ENCODE measurements at regions of chr3 and their contacts with region 1.

Region 1: GRCh38 chr3:9932843-9933560 is 632 bp upstream of the CRELD1 start:
- DNase-seq: peak; percentile 83
- ATAC-seq: peak; percentile 71
- H3K4me3 Mint-ChIP-seq: peak overlapping the region; percentile 98
- H3K27ac Mint-ChIP-seq: peak overlapping the region; percentile 98
- H3K4me1 Mint-ChIP-seq: peaks cover 41% of the 10 kb centered on the region
- H3K27me3 Mint-ChIP-seq: no peaks in the 10 kb centered on the region
- CTCF ChIP-seq: peak; percentile 71

Region 2: DNA sequence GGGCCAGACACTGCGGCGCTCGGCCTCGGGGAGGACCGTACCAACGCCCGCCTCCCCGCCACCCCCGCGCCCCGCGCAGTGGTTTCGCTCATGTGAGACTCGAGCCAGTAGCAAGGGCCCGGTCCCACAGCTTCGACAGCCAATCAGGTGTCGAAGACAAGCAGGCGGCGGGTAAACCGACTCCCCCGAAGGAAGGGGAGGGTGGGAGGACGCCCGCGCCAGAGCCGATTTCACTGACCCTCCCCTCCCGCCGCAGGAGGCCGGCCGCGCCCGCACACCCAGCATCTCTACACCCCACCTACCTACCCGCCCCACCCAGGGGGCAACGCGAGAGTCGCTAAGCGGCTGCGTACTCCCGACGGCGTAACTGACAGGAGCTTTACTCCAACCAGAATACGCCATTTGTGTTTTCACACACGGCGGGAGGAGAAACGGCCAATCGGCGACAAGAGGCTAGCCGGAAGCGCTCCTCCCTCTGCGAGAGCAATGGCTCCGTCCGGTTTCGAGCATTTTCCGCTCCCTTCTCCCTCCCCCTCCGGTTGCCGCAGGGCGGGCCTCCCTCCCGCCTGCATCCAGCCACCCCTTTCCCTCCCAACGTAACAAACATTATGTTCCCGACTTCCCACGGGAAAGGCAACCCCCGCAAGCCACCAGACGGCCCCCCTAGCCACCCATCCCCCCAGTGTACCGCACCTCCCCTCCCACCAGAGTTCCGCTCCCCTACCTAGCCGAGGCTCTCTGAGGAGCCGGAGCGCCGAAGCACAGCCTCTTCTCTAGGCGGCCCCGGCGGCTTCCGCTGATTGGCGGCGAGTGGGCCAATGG is 536.1 kb before region 1 on chr3:
- CTCF ChIA-PET with region 1: no interaction called
- POLR2A ChIA-PET with region 1: interaction called, 12 read pairs
- intact Hi-C with region 1: loop called (anchors 1 kb)
- DNase-seq: peak; percentile 99
- ATAC-seq: peak; percentile 71
- H3K4me3 Mint-ChIP-seq: peak overlapping the region; percentile 98
- H3K27ac Mint-ChIP-seq: peak overlapping the region; percentile 100
- H3K4me1 Mint-ChIP-seq: peaks cover 61% of the 10 kb centered on the region
- H3K27me3 Mint-ChIP-seq: no peaks in the 10 kb centered on the region
- CTCF ChIP-seq: no peak

Region 3: DNA sequence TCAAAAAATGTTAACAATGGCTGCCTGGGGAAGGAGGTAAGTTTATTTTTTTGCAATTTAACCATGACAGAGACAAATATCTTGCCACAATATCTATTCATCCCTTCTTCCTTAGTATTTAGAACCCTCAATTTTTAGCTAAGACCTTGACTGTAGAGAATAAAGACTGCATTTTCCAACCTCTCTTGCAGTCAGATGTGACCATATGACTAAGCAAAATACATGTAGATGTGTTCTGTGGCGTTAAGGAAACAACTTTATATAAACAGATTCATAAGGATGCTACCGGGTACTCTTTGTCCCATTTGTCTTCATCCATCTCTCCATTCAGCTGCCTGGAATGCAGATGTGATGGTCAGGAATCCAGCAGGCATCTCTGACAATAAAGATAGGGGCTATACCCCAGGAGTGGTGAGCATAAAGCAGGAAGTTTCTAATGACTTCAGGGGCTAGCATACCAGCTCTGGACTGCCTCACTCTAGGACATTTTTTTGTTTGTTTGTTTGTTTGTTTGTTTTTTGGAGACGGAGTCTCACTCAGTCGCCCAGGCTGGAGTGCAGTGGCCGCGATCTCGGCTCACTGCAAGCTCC is 420.5 kb before region 1 on chr3:
- CTCF ChIA-PET with region 1: no interaction called
- POLR2A ChIA-PET with region 1: no interaction called
- intact Hi-C with region 1: no loop called
- DNase-seq: no peak
- ATAC-seq: no peak
- H3K4me3 Mint-ChIP-seq: no peak overlapping the region
- H3K27ac Mint-ChIP-seq: no peak overlapping the region
- H3K4me1 Mint-ChIP-seq: no peaks in the 10 kb centered on the region
- H3K27me3 Mint-ChIP-seq: peaks cover 24% of the 10 kb centered on the region
- CTCF ChIP-seq: no peak

Region 4: GRCh38 chr3:9792405-9793160 is 140.4 kb before region 1 on chr3 and contains the starts of genes ARPC4 and TADA3:
- CTCF ChIA-PET with region 1: interaction called, 7 read pairs
- POLR2A ChIA-PET with region 1: interaction called, 34 read pairs
- intact Hi-C with region 1: loop called (anchors 2 kb)
- DNase-seq: peak; percentile 92
- ATAC-seq: peak; percentile 75
- H3K4me3 Mint-ChIP-seq: peak within 1 kb of the TSS; percentile 99
- H3K27ac Mint-ChIP-seq: peak within 1 kb of the TSS; percentile 100
- H3K4me1 Mint-ChIP-seq: peaks cover 67% of the 10 kb centered on the region
- H3K27me3 Mint-ChIP-seq: no peaks in the 10 kb centered on the region
- CTCF ChIP-seq: no peak
- total RNA-seq, gene ARPC4: 315 and 338 TPM in 2 replicates
- total RNA-seq, gene TADA3: 43.8 and 44.7 TPM in 2 replicates

Region 5: DNA sequence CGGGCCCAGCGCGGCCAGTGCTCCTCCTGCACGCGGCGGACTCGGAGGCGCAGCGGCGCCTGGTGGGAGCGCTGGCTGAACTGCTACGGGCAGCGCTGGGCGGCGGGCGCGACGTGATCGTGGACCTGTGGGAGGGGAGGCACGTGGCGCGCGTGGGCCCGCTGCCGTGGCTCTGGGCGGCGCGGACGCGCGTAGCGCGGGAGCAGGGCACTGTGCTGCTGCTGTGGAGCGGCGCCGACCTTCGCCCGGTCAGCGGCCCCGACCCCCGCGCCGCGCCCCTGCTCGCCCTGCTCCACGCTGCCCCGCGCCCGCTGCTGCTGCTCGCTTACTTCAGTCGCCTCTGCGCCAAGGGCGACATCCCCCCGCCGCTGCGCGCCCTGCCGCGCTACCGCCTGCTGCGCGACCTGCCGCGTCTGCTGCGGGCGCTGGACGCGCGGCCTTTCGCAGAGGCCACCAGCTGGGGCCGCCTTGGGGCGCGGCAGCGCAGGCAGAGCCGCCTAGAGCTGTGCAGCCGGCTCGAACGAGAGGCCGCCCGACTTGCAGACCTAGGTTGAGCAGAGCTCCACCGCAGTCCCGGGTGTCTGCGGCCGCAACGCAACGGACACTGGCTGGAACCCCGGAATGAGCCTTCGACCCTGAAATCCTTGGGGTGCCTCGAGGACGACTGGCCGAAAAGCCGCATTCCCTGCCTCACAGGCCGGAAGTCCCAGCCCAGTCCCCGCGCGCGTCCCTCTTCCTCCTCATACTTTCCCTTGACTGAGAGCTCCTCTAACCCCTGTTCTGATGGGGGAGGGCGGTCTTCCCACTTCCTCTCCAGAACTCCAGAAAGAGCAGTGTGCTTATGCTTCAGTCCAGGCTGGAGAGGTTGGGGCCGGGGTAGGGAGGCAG is 17.5 kb before region 1 on chr3:
- CTCF ChIA-PET with region 1: interaction called, 6 read pairs
- POLR2A ChIA-PET with region 1: interaction called, 13 read pairs
- intact Hi-C with region 1: loop called (anchors 2 kb)
- DNase-seq: peak; percentile 22
- ATAC-seq: peak; percentile 61
- H3K4me3 Mint-ChIP-seq: peak overlapping the region; percentile 78
- H3K27ac Mint-ChIP-seq: no peak overlapping the region
- H3K4me1 Mint-ChIP-seq: peaks cover 17% of the 10 kb centered on the region
- H3K27me3 Mint-ChIP-seq: peaks cover 10% of the 10 kb centered on the region
- CTCF ChIP-seq: no peak

Region 6: GRCh38 chr3:10010486-10011465 is 77.8 kb after region 1 on chr3:
- CTCF ChIA-PET with region 1: interaction called, 3 read pairs
- POLR2A ChIA-PET with region 1: interaction called, 6 read pairs
- intact Hi-C with region 1: loop called (anchors 1 kb)
- DNase-seq: peak; percentile 86
- ATAC-seq: peak; percentile 86
- H3K4me3 Mint-ChIP-seq: peak overlapping the region; percentile 65
- H3K27ac Mint-ChIP-seq: peak overlapping the region; percentile 1
- H3K4me1 Mint-ChIP-seq: peaks cover 23% of the 10 kb centered on the region
- H3K27me3 Mint-ChIP-seq: no peaks in the 10 kb centered on the region
- CTCF ChIP-seq: no peak

Region 7: DNA sequence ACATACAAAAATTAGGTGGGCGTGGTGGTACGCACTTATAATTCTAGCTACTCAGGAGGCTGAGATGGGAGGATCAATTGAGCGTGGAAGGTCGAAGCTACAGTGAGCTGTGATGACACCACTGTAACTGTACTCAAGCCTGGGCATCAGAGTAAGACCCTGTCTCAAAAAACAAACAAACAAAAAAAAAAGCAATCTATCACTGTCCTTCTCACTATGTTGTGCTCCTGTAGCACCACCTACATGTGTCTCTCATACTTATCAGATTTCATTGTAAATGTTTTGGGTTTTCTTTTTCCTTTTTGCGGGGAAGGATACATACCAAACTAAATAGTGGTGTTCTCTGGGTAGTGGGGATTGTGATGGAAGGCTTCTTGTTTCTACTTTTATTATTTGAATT is 108.0 kb after region 1 on chr3:
- CTCF ChIA-PET with region 1: no interaction called
- POLR2A ChIA-PET with region 1: no interaction called
- intact Hi-C with region 1: no loop called
- DNase-seq: no peak
- ATAC-seq: no peak
- H3K4me3 Mint-ChIP-seq: no peak overlapping the region
- H3K27ac Mint-ChIP-seq: no peak overlapping the region
- H3K4me1 Mint-ChIP-seq: no peaks in the 10 kb centered on the region
- H3K27me3 Mint-ChIP-seq: no peaks in the 10 kb centered on the region
- CTCF ChIP-seq: no peak

Region 8: DNA sequence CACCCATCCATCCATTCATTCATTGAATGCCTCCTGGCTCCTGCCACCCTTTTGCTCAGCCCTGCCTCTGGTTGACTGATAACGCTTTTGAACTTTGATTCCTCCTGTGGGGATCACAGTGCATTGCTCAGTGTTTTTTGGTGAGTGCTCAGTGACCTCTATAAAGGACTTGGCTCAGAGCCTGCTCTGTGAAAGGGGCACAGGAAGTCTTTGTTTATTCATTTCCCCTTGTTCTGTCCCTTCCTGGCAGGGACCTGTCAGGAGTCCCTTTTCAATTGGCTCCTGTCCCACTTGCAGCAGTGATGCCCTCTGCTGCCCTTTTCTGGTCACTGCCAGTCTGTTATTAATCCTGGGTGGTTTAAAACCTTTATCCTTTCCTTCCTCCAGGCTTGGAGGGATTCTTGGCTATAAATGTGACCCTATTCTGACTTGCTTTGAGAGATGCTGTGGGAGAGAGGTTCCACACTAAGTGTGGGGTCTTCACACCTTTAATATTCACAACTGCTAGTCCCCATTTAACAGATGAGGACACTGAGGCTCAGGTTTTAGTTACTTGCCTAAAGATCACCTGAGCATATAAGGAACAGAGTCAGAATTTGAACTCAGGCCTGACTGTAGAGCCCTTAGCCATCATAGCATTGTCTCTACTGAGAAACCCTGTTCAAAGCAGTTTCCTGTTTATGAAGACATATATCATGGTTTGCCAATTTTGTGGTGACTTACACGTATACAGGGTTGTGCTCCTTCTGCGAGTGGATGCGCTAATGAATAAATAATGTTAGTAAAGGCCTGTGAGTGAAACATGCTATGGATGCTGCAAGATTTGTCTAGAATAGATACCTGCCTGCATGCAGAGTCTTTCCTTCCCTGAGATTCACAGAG is 292.0 kb after region 1 on chr3:
- CTCF ChIA-PET with region 1: interaction called, 3 read pairs
- POLR2A ChIA-PET with region 1: interaction called, 7 read pairs
- intact Hi-C with region 1: loop called (anchors 1 kb)
- DNase-seq: peak; percentile 32
- ATAC-seq: peak; percentile 63
- H3K4me3 Mint-ChIP-seq: peak overlapping the region; percentile 48
- H3K27ac Mint-ChIP-seq: peak overlapping the region; percentile 61
- H3K4me1 Mint-ChIP-seq: peaks cover 65% of the 10 kb centered on the region
- H3K27me3 Mint-ChIP-seq: no peaks in the 10 kb centered on the region
- CTCF ChIP-seq: peak; percentile 85

Measured in activated B cell treated with CpG ODN at 0.5 μM for 24 hours (primary cell).